ENCODE measurements at regions of chr12 and their contacts with region 1.

Region 1: GRCh38 chr12:4763549-4763948 is 43.3 kb downstream of the GALNT8 start:
- DNase-seq: peak in 1 of 2 donors; percentile 32
- ATAC-seq: no peak
- H3K4me3 ChIP-seq: no peak overlapping the region
- H3K27ac ChIP-seq: no peak overlapping the region
- H3K4me1 ChIP-seq: no peaks in the 10 kb centered on the region
- H3K27me3 ChIP-seq: no peaks in the 10 kb centered on the region
- CTCF ChIP-seq: no peak

Region 2: DNA sequence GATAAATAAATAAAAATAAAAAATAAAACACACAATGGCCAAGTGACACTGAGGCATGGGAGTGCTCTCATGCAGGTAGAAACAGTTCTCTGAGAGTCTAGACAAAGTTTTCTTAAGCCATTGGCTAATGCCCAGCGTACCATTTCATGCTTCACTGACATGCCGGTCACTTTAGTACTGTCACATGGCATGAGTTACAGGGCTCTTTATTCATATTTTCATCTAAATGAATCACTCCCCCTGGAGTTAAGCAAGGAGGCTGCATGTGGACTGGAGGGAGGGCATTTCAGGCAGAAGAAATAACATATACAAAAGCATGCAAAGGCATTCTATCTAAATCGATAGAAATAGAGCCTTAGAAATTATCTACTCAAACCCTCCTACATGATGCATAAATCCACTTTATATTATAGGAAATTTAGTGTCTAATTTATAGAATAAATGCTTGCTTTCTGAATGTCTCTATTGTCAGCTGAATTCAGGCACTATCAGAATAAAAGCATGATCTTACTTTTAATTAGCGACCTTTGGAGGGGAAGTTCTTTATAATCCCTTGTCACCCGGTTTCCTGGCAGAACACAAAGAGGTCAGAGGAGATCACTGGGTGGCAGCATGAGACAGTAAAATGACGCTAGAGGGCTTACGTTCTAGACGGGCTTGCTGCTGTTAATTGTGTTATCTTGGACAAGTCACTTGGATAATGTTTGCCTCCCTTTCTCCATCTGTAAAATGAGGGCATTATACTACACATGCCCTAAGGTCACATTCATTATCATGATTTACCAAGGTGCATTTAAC is 184.0 kb before region 1 on chr12:
- intact Hi-C with region 1: loop called in 1 of 2 experiments (anchors 10 kb)
- DNase-seq: no peak
- ATAC-seq: no peak
- H3K4me3 ChIP-seq: no peak overlapping the region
- H3K27ac ChIP-seq: no peak overlapping the region
- H3K4me1 ChIP-seq: no peaks in the 10 kb centered on the region
- H3K27me3 ChIP-seq: peaks cover 0 to 4% (median 0%) of the 10 kb centered on the region in 3 donors
- CTCF ChIP-seq: no peak

Region 3: DNA sequence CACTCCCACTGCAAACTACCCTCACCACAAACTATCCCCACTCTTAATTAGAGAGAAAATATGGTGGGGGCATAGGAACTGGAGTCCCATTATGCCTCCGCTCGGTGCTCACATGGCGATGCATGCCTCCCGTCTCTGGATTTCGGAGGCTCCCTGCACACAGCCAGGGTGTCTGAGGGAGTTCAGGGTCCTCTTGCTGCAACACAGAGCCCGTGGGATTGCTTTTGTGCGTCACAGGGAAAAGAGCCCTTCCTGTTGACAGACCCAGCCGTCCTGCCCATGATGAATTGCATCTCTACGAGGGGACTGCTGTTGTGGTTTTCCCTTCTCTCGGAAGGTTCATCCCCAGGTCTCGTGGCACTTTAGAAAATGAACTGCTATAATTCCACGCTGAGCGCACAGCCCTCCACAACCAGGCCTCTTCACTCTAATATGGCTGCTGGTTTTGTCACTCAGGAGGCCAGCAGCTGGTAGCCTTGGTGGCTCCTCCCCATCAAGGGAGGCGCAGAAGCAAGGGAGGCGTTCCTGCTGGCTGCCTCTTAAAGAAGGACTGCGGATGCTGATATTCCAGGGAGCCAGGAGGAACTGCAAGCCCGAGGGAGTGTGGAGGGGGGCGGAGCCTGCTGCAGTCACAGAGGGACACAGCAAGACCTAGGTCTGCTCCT is 438.1 kb after region 1 on chr12:
- intact Hi-C with region 1: no loop called
- DNase-seq: peak in 1 of 2 donors; percentile 55
- ATAC-seq: peak in 1 of 4 donors; percentile 32
- H3K4me3 ChIP-seq: no peak overlapping the region
- H3K27ac ChIP-seq: no peak overlapping the region
- H3K4me1 ChIP-seq: no peaks in the 10 kb centered on the region
- H3K27me3 ChIP-seq: no peaks in the 10 kb centered on the region
- CTCF ChIP-seq: no peak